Activated naive CD8-positive, alpha-beta T cell treated with anti-CD3 and anti-CD28 coated beads, Interleukin-2, amount 10 ng/mL, durations not matched to agents 7 days and 5 days (primary cell): ENCODE measurements at regions of chr1 and their contacts with region 1.

Region 1: GRCh38 chr1:18926315-18927081 is 24.1 kb upstream of the ALDH4A1 start:
- DNase-seq: peak; percentile 75
- ATAC-seq: peak; percentile 86
- H3K4me3 Mint-ChIP-seq: peak overlapping the region; percentile 68
- H3K27ac Mint-ChIP-seq: peak overlapping the region; percentile 99
- H3K4me1 Mint-ChIP-seq: peaks cover 44% of the 10 kb centered on the region
- H3K27me3 Mint-ChIP-seq: no peaks in the 10 kb centered on the region

Region 2: DNA sequence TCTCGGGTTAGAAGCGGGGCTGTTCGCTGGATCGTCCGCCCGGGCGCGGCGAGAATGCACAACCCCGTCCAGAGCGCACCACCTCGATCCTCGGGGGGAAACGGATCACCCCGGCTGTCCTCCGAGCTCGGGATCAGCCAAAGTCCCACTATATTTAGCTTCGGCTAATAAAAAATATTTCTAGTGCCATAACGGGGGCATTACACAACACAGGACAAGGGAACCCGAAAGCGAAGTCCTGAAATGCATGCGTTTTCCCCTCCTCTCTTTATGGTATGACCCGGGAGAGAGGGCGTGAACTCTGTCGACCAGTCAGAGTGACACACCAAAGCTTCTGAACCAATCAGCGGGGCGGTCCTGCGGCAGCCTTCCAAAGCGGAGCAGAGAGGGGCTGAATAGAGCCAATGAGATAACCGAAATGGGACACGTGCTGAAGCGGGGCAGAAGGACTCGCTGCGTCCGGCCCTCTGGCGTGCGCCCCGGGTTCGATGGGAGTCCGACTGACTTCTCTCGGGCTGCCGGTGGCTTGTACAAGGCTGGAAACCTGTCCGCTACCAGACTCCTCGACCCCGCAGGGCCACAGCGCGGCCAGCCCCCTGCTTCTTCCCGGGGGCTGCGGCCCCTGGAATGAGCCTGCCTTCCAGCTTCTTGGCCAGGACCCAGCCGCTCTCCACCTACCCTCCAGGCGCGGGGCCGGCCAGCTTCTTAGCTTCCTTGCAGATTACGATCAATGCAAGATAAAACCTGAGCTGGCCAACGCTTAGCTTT is 23.8 kb before region 1 on chr1 and contains the start of gene ALDH4A1:
- POLR2A ChIA-PET with region 1: interaction called, 14 read pairs
- DNase-seq: peak; percentile 84
- ATAC-seq: peak; percentile 99
- H3K4me3 Mint-ChIP-seq: peak within 1 kb of the TSS; percentile 96
- H3K27ac Mint-ChIP-seq: peak within 1 kb of the TSS; percentile 94
- H3K4me1 Mint-ChIP-seq: peaks cover 22% of the 10 kb centered on the region
- H3K27me3 Mint-ChIP-seq: peaks cover 12% of the 10 kb centered on the region
- total RNA-seq, gene ALDH4A1: 2.5 to 3.3 TPM

Region 3: GRCh38 chr1:18913065-18913835 is 13.2 kb before region 1 on chr1:
- POLR2A ChIA-PET with region 1: interaction called, 17 read pairs
- DNase-seq: peak; percentile 82
- ATAC-seq: peak; percentile 71
- H3K4me3 Mint-ChIP-seq: no peak overlapping the region
- H3K27ac Mint-ChIP-seq: no peak overlapping the region
- H3K4me1 Mint-ChIP-seq: peaks cover 2% of the 10 kb centered on the region
- H3K27me3 Mint-ChIP-seq: no peaks in the 10 kb centered on the region

Region 4: GRCh38 chr1:18945401-18945849 is 18.9 kb after region 1 on chr1:
- POLR2A ChIA-PET with region 1: interaction called, 229 read pairs
- DNase-seq: no peak
- ATAC-seq: no peak
- H3K4me3 Mint-ChIP-seq: no peak overlapping the region
- H3K27ac Mint-ChIP-seq: no peak overlapping the region
- H3K4me1 Mint-ChIP-seq: peaks cover 34% of the 10 kb centered on the region
- H3K27me3 Mint-ChIP-seq: no peaks in the 10 kb centered on the region

Region 5: DNA sequence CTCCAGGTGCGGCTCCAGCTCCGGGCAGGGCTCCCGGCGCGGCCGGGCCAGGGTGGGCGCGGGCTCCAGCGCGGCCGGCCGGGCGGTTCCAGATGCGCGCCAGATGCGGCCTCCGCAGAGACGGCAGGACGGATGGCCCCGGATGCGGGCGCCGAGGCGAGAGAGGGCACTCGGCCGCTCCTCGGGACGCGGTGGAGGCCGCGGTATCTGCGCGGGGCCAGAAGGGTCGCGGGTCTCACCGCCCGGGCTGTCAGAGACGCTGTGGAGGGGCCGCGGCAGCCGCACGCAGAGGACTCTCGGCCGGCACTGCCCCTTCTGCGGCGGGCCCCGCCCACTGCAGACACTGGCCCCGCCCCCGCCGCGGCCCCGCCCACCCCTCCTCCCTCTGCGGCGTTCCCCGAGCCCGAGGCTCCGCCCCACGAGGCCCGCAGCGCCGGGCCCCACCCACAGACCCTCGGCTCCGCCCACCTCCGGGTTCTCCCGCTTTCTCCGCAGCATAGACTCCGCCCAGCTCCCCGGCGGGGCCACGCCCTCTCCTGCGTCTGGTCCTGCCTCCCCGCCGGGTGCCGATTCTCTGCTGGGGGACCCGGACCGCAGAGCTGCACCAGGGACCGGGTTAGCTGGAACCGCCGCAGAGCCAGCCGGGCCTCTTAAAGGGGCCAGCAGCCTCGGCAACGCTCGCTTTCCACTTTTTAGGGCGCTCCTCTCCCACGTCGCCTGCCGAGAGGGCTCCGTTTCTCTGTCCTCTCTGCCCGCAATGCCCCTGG is 30.1 kb after region 1 on chr1 and contains the start of gene IFFO2:
- POLR2A ChIA-PET with region 1: interaction called, 229 read pairs
- DNase-seq: peak; percentile 99
- ATAC-seq: peak; percentile 70
- H3K4me3 Mint-ChIP-seq: peak within 1 kb of the TSS; percentile 79
- H3K27ac Mint-ChIP-seq: peak within 1 kb of the TSS; percentile 65
- H3K4me1 Mint-ChIP-seq: peaks cover 44% of the 10 kb centered on the region
- H3K27me3 Mint-ChIP-seq: peaks cover 43% of the 10 kb centered on the region
- total RNA-seq, gene IFFO2: 21.6 to 21.8 TPM

Region 6: DNA sequence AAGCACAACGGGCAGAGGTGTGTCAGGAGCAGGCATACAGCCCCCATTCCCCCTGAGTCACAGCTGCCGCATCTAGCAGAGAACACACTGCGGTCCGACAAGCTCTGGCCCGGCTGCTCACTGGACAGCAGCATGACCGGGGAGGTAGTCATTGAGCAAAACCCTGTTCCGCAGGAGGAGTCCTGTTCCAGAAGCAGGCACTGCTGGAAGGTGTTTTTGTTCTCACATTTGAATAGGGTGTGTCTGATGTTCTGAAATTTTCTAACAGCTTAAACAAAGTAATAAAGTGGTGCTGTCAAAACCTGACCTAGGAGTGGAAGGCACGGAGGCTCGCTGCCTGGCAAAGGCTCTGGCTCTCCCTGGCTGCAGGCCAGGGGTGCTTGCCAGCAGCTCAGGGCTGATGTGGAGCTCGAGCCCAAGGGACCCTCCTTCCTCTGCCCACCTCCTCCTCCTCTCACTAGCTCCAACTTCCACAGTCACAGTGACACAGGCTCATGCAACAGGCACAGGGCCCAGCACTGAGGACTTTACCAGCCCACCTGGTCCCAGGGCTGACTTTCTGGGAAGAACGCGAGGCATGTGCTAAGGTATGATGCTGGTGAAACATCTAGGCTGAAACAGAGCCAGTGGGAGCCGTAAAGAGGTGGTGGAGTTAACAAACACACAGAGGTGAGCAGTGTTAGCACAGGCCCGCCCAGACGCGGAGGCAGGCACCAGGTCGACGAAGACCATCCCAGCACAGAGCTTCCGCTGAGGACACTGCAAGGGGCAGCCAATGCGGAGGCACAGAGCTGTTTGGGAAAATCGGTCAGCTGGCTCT is 148.6 kb after region 1 on chr1:
- POLR2A ChIA-PET with region 1: interaction called, 10 read pairs
- DNase-seq: no peak
- ATAC-seq: peak; percentile 36
- H3K4me3 Mint-ChIP-seq: peak overlapping the region; percentile 53
- H3K27ac Mint-ChIP-seq: peak overlapping the region; percentile 65
- H3K4me1 Mint-ChIP-seq: peaks cover 27% of the 10 kb centered on the region
- H3K27me3 Mint-ChIP-seq: peaks cover 10% of the 10 kb centered on the region